ENCODE measurements at regions of chr19 and their contacts with region 1.

Region 1: DNA sequence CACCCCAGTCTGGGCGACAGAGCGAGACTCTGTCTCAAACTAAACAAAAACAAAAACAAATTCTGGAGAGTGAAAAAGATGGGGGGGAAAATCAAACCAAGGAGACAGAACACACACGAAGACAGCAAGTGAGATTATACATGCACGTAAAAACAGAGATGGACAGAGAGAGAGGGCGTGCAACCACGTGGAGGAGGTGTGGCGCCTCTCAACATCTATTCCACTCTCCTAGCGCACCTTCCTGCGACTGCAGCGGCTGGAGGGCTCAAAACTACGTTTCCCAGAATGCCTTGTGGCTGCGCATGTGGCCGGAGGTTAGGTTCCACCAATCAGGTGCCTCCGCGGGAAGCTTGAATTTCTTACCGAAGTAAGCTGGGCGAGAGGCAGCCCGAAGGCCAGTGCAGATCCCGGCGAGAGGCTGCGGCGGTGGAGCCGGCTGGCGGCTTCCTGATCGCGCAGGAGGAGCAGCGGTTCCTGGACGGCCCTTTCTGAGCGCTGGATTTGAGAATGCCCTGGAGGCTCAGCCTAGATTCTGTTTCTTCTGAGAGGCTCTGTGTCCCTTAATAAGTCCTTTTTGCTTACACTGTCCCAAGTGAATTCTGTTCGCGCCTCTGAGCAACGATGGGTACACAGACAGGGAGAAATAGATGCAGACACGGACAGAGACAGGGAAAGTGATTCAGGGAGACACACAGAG is 13.1 kb upstream of the NANOS2 start:
- DNase-seq: peak; percentile 84
- ATAC-seq: peak; percentile 99
- H3K4me3 ChIP-seq: no peak overlapping the region
- H3K27ac ChIP-seq: no peak overlapping the region; the same call in 1 of the 2 replicates
- H3K4me1 ChIP-seq: no peaks in the 10 kb centered on the region
- H3K27me3 ChIP-seq: peaks cover 12% of the 10 kb centered on the region
- CTCF ChIP-seq: no peak
- POLR2A ChIP-seq: no peak
- RAD21 ChIP-seq: no peak

Region 2: DNA sequence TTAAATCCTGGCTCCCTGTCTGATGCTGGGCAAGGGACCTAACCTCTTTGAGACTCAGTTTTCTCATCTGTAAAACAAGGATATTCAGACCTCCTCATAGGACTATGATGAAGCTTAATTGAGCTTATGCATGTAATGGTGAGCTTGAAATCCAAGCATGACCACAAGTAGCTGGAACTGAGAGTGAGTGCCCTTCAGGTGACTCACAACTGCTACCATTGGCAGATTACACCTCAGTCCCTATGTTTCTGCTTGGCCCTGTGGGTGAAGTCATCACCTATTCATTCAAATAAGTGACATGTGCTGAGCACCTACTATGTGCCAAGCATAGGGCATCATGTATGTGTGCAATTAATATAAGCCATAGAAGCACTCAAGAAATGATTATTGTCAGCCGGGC is 20.2 kb after region 1 on chr19:
- CTCF ChIA-PET with region 1: no interaction called
- POLR2A ChIA-PET with region 1: interaction called, 17 read pairs
- dilution Hi-C with region 1: no loop called
- in situ Hi-C with region 1: no loop called
- intact Hi-C with region 1: no loop called
- DNase-seq: peak; percentile 36
- ATAC-seq: no peak
- H3K4me3 ChIP-seq: no peak overlapping the region
- H3K27ac ChIP-seq: no peak overlapping the region
- H3K4me1 ChIP-seq: no peaks in the 10 kb centered on the region
- H3K27me3 ChIP-seq: peaks cover 3% of the 10 kb centered on the region; the same call in 1 of the 2 replicates
- CTCF ChIP-seq: no peak
- POLR2A ChIP-seq: no peak
- RAD21 ChIP-seq: no peak

Region 3: GRCh38 chr19:45994989-45995714 is 67.4 kb after region 1 on chr19 and contains the start of gene CCDC61:
- CTCF ChIA-PET with region 1: no interaction called
- POLR2A ChIA-PET with region 1: no interaction called
- dilution Hi-C with region 1: no loop called
- in situ Hi-C with region 1: no loop called
- intact Hi-C with region 1: loop called (anchors 10 kb)
- DNase-seq: peak; percentile 99
- ATAC-seq: peak; percentile 98
- H3K4me3 ChIP-seq: peak within 1 kb of the TSS; percentile 83
- H3K27ac ChIP-seq: peak within 1 kb of the TSS; percentile 64
- H3K4me1 ChIP-seq: peaks cover 2% of the 10 kb centered on the region
- H3K27me3 ChIP-seq: peaks cover 2% of the 10 kb centered on the region
- CTCF ChIP-seq: no peak
- POLR2A ChIP-seq: peak; percentile 87
- RAD21 ChIP-seq: no peak
- total RNA-seq, gene CCDC61: 3.2 and 3.6 TPM in 2 replicates

Measured in IMR-90 (cell line).